Ascending aorta (tissue), 2 donors: ENCODE measurements at regions of chr17 and their contacts with region 1.

Region 1: DNA sequence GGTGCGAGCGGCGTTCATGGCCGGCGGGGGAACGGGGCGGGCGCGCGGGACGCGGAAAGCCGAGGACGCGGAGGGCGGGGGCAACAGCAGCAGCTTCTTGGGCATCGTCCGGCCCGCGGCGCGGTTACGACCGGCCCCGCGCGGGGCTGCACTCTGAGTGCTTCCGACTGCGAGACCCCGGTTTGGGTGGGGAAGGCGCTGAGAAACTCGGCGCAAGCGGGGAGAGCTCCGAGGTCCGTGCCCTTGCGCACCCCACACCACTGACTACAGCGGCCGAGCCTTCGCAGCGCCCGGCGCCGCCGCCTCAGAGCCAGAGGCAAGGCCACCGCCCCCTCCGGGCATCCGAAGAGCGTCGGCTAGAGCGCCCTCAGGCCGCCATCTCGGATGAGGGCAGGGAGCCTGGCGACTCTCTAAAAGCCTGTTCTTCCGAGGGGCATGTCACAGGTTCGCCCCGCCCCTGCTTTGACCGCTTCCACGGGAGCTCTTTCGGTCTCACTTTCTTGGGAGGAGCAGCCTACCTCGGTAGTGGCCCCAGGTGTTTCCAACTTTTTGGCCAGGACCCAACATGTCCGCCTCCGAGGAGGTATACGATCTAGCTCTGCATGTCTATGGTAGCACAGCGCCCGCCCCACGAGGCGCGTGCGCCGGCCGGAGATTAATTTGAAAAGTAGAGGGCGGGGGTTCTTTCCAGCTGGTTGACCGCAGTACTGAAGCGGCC is at the start of gene PRPSAP1:
- DNase-seq: peak; percentile 41 to 90
- H3K4me3 ChIP-seq: peak within 1 kb of the TSS; percentile 97
- H3K27ac ChIP-seq: peak within 1 kb of the TSS; percentile 83 to 88
- H3K4me1 ChIP-seq: peaks cover 0 to 16% of the 10 kb centered on the region in 2 donors
- H3K27me3 ChIP-seq: no peaks in the 10 kb centered on the region
- CTCF ChIP-seq: peak; percentile 43 to 73 (median 69)
- total RNA-seq, gene PRPSAP1: 16.1 TPM

Region 2: DNA sequence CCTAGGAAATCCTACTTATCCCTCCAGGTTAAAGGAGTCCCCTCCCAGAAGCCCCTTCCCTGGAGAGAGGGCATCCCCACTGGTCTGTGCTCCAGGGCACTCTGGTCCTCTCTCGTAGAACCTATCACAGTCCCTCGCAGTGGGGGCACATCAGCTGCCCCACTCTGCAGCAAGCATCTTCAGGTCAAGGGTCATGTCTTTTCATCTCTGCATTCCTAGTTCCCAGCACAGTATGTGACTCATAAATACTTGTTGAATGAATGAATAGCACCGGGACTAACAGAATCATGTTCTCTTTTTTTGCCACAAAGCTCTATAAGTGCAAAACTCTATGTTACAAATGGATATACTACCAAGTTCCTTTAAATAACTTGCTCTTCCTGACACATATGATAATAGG is 149.5 kb before region 1 on chr17:
- intact Hi-C with region 1: no loop called
- DNase-seq: no peak
- H3K4me3 ChIP-seq: no peak overlapping the region
- H3K27ac ChIP-seq: no peak overlapping the region
- H3K4me1 ChIP-seq: no peaks in the 10 kb centered on the region
- H3K27me3 ChIP-seq: no peaks in the 10 kb centered on the region
- CTCF ChIP-seq: no peak

Region 3: GRCh38 chr17:76304226-76305134 is 49.3 kb before region 1 on chr17:
- intact Hi-C with region 1: loop called (anchors 5 kb)
- DNase-seq: no peak
- H3K4me3 ChIP-seq: no peak overlapping the region
- H3K27ac ChIP-seq: no peak overlapping the region
- H3K4me1 ChIP-seq: no peaks in the 10 kb centered on the region
- H3K27me3 ChIP-seq: no peaks in the 10 kb centered on the region
- CTCF ChIP-seq: no peak

Region 4: GRCh38 chr17:76370261-76370993 is 16.7 kb after region 1 on chr17:
- intact Hi-C with region 1: loop called (anchors 1 kb)
- DNase-seq: peak; percentile 50 to 94
- H3K4me3 ChIP-seq: no peak overlapping the region
- H3K27ac ChIP-seq: peak overlapping the region; percentile 75 to 76
- H3K4me1 ChIP-seq: peaks cover 0 to 8% of the 10 kb centered on the region in 2 donors
- H3K27me3 ChIP-seq: no peaks in the 10 kb centered on the region
- CTCF ChIP-seq: peak; percentile 25 to 68 (median 55)

Region 5: DNA sequence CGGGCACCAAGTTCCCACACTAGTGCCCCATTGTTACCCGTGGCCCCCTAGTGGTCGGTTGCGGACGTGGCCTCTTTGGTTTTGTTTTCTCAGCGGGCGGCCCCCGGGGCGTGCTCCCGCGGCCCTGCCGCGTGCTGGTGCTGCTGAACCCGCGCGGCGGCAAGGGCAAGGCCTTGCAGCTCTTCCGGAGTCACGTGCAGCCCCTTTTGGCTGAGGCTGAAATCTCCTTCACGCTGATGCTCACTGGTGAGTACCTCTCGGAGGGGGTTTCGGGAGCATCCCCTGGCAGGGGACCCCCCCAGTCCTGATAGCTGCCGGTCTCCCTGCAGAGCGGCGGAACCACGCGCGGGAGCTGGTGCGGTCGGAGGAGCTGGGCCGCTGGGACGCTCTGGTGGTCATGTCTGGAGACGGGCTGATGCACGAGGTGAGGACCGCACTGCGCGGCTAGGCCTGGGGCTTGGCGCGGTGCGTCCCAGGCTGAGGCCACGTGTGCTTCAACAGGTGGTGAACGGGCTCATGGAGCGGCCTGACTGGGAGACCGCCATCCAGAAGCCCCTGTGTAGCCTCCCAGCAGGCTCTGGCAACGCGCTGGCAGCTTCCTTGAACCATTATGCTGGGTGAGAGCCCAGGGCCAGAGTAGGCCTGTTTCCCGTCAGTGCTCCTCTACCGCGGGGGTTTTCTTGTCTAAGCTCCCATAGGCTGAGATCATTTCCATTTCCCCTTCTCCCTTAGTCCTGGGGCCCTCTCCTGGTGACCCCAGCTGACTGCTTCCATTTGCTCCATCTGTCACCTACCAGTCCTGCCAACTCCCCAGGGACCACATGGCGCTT is 32.3 kb after region 1 on chr17:
- intact Hi-C with region 1: loop called (anchors 1 kb)
- DNase-seq: peak; percentile 30 to 86
- H3K4me3 ChIP-seq: peak overlapping the region; percentile 67 to 93
- H3K27ac ChIP-seq: peak overlapping the region; percentile 2 to 94
- H3K4me1 ChIP-seq: peaks cover 6 to 26% of the 10 kb centered on the region in 2 donors
- H3K27me3 ChIP-seq: no peaks in the 10 kb centered on the region
- CTCF ChIP-seq: peak; percentile 80 to 90 (median 87)

Region 6: DNA sequence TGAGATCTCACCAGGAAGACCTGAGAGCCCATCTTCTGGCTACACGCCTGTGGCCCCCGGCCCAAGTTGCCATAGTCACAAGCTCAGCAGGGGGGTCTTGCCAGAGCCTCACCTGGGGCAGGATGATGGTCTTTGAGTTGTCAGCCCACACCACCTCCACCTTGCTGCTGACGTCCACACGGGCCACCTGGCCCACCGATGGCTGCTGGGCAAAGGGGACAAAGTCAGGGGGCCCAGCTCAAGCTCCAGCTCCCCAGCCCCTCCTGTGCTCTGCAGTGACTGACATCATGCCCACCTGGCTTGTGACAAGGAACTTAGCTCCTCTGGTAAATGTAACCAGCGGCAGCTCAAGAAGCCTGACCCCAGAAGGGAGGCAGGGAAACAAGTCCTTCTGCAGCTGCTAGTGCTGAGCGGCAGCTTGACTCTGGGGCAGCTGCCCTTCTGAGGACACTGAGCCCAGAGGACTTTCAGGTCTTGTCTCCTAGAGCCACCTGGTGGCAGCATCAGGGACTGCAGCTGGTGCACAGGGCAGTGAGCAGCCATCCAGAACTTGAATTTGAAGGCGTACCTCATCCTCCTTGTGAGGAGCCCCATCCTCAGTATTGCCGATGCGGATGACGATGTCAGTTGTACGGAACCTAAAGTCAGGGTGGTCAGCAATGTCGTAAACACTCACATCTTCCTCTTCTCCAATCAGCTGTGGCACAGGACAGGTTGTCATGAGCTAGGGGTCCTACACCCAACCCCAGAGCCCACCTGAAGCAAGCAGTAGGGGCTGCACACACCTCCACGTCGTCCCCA is 44.1 kb after region 1 on chr17:
- intact Hi-C with region 1: loop called (anchors 2 kb)
- DNase-seq: peak; percentile 43 to 94
- H3K4me3 ChIP-seq: no peak overlapping the region
- H3K27ac ChIP-seq: no peak overlapping the region
- H3K4me1 ChIP-seq: no peaks in the 10 kb centered on the region
- H3K27me3 ChIP-seq: no peaks in the 10 kb centered on the region
- CTCF ChIP-seq: peak; percentile 97 to 99 (median 98)